ENCODE measurements at regions of chr1 and their contacts with region 1.

Region 1: DNA sequence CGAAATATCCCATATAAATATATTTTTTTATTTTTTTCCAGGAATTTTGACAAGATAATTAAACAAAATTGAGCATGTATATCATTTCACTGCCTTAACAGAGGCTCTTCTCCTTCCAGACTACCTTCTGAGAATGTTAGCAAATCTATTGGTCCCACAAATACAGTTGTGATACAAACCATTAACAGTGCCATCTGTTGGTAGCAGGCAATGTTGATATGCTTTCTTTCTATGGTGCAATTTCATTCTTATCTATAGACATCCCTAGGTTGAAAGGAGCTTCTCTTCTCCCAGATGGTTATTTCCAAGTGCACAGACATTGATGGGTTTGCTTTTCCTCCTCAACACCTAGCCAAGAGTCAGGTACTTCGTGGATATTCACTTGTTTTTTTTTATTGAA is 303.6 kb downstream of the USH2A start:
- DNase-seq: peak; percentile 12
- H3K4me3 Mint-ChIP-seq: no peak overlapping the region
- H3K27ac Mint-ChIP-seq: no peak overlapping the region
- H3K4me1 Mint-ChIP-seq: no peaks in the 10 kb centered on the region
- H3K27me3 Mint-ChIP-seq: no peaks in the 10 kb centered on the region
- CTCF ChIP-seq: no peak

Region 2: GRCh38 chr1:215824245-215824644 is 295.4 kb before region 1 on chr1:
- CTCF ChIA-PET with region 1: no interaction called
- intact Hi-C with region 1: loop called (anchors 1 kb)
- DNase-seq: peak; percentile 21
- H3K4me3 Mint-ChIP-seq: no peak overlapping the region
- H3K27ac Mint-ChIP-seq: no peak overlapping the region
- H3K4me1 Mint-ChIP-seq: no peaks in the 10 kb centered on the region
- H3K27me3 Mint-ChIP-seq: no peaks in the 10 kb centered on the region
- CTCF ChIP-seq: peak; percentile 57

Measured in Calu3 (cell line).